IMR-90 (cell line): ENCODE measurements at regions of chr1 and their contacts with region 1.

Region 1: DNA sequence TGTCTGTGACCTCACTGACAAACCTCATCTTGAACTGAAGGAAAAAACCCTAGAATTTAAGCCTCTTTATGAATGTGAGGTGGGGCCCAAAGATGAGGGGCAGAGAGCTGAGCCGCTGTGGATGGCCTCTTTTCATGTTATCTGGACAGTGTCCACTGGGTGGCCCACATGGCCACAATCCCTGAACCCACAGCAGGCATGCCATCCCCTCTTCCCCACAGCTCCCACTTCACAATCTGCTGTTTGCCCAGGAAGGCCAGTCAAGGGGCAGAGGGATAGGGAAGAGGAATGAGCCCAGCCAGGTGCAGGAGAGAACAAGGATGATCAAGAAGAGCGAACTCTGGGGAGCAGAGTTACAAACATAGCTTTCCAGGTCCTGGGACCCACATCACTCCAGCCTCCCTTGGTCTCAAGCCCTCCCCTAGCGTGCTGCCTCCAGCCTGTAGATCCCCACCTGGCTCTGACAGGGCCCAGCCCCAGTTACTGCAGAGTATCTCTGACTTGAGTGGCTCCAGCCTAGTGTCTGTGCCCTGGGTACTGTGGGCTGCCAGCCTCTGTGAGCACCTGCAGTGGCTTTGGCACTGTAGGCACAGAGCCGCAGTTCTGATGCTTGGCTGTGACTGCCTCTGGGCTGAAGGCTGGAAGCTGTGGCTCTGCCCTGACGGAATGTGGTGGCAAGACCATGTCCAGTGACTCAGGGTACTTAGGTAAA is 1.9 kb upstream of the SLFNL1 start:
- DNase-seq: no peak
- ATAC-seq: peak; percentile 57
- H3K4me3 ChIP-seq: no peak overlapping the region
- H3K27ac ChIP-seq: no peak overlapping the region
- H3K4me1 ChIP-seq: peaks cover 5% of the 10 kb centered on the region
- H3K27me3 ChIP-seq: no peaks in the 10 kb centered on the region
- CTCF ChIP-seq: peak; percentile 40
- POLR2A ChIP-seq: no peak
- RAD21 ChIP-seq: peak; percentile 56

Region 2: DNA sequence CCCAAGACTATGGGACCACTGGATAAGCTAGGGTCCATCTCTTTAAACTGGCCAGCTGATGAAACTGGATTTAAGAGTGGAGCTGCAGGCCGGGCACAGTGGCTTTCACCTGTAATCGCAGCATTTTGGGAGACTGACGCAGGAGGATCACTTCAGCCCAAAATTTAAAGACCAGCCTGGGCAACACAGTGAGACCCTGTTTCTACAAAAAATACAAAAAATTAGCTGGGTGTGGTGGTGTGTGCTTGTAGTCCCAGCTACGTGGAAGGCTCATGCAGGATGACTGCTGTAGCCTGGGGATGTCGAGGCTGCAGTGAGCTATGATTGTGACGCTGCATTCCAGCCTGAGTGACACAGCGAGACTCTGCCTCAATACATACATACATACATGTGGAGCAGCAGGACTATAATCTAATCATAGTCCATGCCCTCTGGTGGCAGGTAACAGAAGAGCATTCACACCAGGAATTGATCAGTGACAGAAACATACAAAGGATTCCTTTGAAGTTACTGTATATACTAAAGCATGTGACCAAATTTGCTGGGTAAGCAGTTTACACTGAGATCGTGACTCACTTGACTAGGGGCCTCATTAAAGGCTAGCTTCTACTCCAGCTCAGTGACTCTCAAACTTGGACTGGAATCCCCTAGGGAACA is 99.5 kb after region 1 on chr1:
- CTCF ChIA-PET with region 1: interaction called, 3 read pairs
- POLR2A ChIA-PET with region 1: no interaction called
- dilution Hi-C with region 1: no loop called
- in situ Hi-C with region 1: no loop called
- intact Hi-C with region 1: loop called (anchors 1 kb)
- DNase-seq: peak; percentile 91
- ATAC-seq: peak; percentile 96
- H3K4me3 ChIP-seq: no peak overlapping the region
- H3K27ac ChIP-seq: no peak overlapping the region
- H3K4me1 ChIP-seq: peaks cover 7% of the 10 kb centered on the region
- H3K27me3 ChIP-seq: no peaks in the 10 kb centered on the region
- CTCF ChIP-seq: peak; percentile 59
- POLR2A ChIP-seq: no peak
- RAD21 ChIP-seq: peak; percentile 56

Region 3: GRCh38 chr1:41432481-41433280 is 409.2 kb after region 1 on chr1:
- CTCF ChIA-PET with region 1: no interaction called
- POLR2A ChIA-PET with region 1: no interaction called
- dilution Hi-C with region 1: no loop called
- in situ Hi-C with region 1: no loop called
- intact Hi-C with region 1: loop called (anchors 5 kb)
- DNase-seq: peak; percentile 76
- ATAC-seq: peak; percentile 87
- H3K4me3 ChIP-seq: no peak overlapping the region
- H3K27ac ChIP-seq: no peak overlapping the region
- H3K4me1 ChIP-seq: peaks cover 8% of the 10 kb centered on the region
- H3K27me3 ChIP-seq: peaks cover 33% of the 10 kb centered on the region
- CTCF ChIP-seq: peak; percentile 80
- POLR2A ChIP-seq: no peak
- RAD21 ChIP-seq: peak; percentile 71